Mammary epithelial cell (primary cell): ENCODE measurements at regions of chr9 and their contacts with region 1.

Region 1: DNA sequence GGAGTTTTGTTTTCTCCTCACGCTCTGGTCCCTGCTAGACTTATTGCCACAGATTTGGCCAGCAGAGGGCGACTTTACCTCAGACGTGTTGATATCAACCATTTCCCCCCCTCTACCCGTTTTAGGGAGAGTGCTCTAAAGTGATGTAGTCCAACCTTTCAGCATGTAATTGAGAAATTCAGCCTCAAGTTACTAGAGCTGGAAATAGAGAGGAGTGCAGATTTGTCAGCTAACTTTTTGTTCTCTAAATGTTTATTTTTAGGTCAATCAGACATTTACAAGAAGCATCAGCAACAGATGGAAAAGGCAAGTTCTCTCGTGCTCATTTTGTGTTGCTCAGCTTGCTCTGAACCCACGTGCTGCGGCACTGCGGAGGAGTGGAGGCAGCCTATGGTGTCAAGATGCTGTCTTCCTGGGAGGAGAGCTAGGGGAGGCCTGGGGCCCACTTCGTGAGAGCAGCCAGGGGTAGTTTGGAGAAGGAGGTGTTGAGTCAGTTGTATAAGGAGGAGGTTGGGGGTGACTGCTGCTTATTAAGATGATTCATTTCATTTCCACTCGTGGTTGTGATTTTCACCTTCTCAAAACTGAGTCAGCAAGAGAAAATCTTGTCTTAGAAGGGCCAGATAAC is 53.6 kb downstream of the GPR107 start:
- DNase-seq: peak; percentile 52
- H3K4me3 ChIP-seq: no peak overlapping the region
- H3K27ac ChIP-seq: no peak overlapping the region
- H3K4me1 ChIP-seq: no peaks in the 10 kb centered on the region
- H3K27me3 ChIP-seq: no peaks in the 10 kb centered on the region
- CTCF ChIP-seq: peak; percentile 79 to 80

Region 2: GRCh38 chr9:129929467-129930125 is 177.8 kb before region 1 on chr9:
- CTCF ChIA-PET with region 1: no interaction called
- dilution Hi-C with region 1: no loop called
- in situ Hi-C with region 1: no loop called
- intact Hi-C with region 1: no loop called
- DNase-seq: peak; percentile 21
- H3K4me3 ChIP-seq: no peak overlapping the region
- H3K27ac ChIP-seq: no peak overlapping the region
- H3K4me1 ChIP-seq: no peaks in the 10 kb centered on the region
- H3K27me3 ChIP-seq: no peaks in the 10 kb centered on the region
- CTCF ChIP-seq: no peak

Region 3: DNA sequence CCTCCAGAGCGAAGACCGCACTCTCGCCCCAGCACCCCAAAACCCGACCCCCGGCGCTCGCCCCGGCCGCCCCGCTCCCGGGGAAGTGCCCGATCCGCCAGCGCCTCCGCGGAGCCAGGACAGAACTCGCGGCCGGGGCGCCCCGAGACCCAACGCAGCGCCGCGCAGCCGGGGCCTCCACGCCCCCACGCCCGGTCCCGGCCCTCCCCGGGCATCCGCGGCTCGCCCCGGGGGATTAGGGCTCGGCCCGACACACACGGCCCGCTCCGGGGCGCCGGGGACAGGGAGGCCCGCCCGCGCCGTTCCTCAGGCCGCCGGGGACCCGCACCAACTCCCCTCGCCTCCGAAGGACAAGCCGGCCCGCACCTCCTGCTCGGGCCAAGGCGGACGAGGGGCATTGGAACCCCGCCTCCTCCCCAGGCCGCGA is 64.9 kb before region 1 on chr9:
- CTCF ChIA-PET with region 1: no interaction called
- dilution Hi-C with region 1: no loop called
- in situ Hi-C with region 1: no loop called
- intact Hi-C with region 1: no loop called
- DNase-seq: no peak
- H3K4me3 ChIP-seq: peak overlapping the region; percentile 79 to 88 (median 86)
- H3K27ac ChIP-seq: peak overlapping the region; percentile 34
- H3K4me1 ChIP-seq: peaks cover 4% of the 10 kb centered on the region
- H3K27me3 ChIP-seq: no peaks in the 10 kb centered on the region
- CTCF ChIP-seq: no peak

Region 4: DNA sequence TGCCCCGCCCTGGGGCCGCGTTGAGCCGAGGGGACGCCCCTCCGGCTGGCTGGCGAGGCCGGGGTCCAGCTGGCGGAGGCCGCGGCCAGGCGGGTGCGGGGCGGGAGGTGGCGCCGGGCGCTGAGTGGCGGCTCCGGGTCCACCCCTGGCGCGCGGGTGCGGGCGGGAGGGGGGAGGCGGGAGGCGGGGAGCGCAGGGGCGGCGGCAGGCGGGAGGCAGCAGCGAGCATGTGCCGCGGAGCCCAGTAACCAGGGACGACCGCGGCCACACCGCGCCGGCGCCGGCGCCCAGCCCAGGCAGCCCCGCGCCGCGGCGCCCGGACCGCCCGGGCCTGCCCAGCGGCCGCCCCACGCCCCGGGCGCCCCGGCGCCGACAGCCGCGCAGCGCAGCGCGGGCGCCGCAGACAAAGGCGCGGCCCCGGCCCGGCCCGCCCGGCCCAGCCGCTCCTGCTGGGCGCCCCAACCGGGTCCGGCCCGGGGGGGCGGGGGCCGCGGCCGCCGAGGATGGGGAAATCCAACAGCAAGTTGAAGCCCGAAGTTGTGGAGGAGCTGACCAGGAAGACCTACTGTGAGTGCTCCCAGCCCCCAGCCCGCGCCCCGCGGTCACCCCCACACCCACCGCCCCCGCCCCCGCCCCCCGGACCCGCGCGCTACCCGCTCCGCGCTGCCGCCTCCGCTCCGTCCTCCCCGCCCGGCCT is 65.0 kb after region 1 on chr9 and contains the start of gene NCS1:
- CTCF ChIA-PET with region 1: no interaction called
- dilution Hi-C with region 1: no loop called
- in situ Hi-C with region 1: no loop called
- intact Hi-C with region 1: loop called (anchors 1 kb)
- DNase-seq: peak; percentile 51
- H3K4me3 ChIP-seq: peak within 1 kb of the TSS; percentile 77 to 83 (median 80)
- H3K27ac ChIP-seq: peak within 1 kb of the TSS; percentile 5
- H3K4me1 ChIP-seq: peaks cover 10% of the 10 kb centered on the region
- H3K27me3 ChIP-seq: no peaks in the 10 kb centered on the region
- CTCF ChIP-seq: no peak
- total RNA-seq, gene NCS1: 76.5 to 85.4 TPM

Region 5: DNA sequence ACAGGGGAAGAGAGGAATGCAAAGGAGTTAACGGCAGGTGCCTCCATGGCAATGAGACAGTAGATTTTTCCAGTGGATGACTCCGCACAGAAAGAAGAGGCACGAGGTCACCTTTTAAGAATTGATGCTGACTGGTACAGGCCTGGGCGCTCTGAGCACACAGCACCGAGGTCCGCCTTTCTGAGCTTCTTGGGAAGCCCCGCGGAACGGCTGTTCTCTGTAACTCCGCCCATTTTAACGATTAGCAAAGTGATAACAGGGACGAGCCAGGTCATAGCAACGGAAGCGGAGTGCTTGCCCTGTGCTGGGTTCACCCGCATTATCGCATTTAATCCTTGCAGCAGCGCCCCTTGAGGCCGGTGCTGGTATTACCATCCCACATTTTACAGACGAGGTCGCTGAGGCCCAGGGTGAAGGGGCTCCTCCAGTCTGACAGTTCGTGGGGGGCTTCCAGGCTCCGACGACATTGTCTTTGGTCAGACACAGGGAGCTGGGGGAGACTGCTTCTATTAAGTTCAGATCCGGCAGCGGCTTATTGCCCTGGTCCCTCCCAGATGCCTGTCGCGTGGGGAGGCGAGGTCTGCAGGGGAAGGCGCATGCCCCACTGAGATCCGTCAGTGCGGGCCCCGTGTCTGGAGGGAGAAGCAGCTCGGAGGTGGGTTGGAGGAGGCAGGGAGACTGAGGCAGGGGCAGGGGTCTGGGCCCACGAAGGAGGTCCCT is 135.8 kb after region 1 on chr9:
- CTCF ChIA-PET with region 1: no interaction called
- dilution Hi-C with region 1: no loop called
- in situ Hi-C with region 1: loop called in 1 of 2 experiments (anchors 5 kb)
- intact Hi-C with region 1: loop called (anchors 1 kb)
- DNase-seq: no peak
- H3K4me3 ChIP-seq: no peak overlapping the region
- H3K27ac ChIP-seq: no peak overlapping the region
- H3K4me1 ChIP-seq: no peaks in the 10 kb centered on the region
- H3K27me3 ChIP-seq: no peaks in the 10 kb centered on the region
- CTCF ChIP-seq: peak; percentile 87 to 90

Region 6: GRCh38 chr9:130343445-130343918 is 236.1 kb after region 1 on chr9:
- CTCF ChIA-PET with region 1: no interaction called
- dilution Hi-C with region 1: no loop called
- in situ Hi-C with region 1: loop called in 1 of 2 experiments (anchors 10 kb)
- intact Hi-C with region 1: loop called (anchors 1 kb)
- DNase-seq: no peak
- H3K4me3 ChIP-seq: no peak overlapping the region
- H3K27ac ChIP-seq: no peak overlapping the region
- H3K4me1 ChIP-seq: no peaks in the 10 kb centered on the region
- H3K27me3 ChIP-seq: no peaks in the 10 kb centered on the region
- CTCF ChIP-seq: peak; percentile 44 to 67

Region 7: DNA sequence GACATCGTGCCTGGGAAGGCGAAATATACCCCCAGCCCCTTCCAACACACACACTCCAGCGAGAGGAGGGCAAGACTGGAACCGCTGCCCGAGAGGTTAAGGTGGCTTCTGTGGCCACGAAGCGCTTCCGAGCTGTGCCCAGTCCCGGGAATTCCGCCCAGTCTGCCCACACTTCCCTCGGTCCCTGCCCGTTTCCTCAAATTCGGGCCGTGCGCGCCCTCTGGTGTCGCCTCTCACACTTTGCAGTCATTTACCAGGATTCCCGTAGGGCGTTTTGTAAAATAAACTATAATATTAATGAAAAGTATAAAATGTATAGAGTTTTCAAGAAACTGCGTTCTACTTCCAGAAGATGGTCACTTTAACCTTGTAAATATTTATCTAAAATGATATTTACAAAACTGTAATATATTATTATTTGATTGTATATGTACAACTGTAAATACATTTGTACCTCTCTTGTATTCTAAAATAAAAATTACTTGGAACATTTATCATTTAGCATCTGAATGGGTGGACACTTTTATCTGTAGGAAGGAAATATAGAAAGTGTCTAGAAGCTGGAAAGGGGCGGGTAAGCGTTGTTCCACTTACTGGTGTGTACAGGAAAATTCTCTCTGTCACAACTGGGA is 575.3 kb after region 1 on chr9:
- CTCF ChIA-PET with region 1: no interaction called
- dilution Hi-C with region 1: no loop called
- in situ Hi-C with region 1: no loop called
- intact Hi-C with region 1: loop called (anchors 2 kb)
- DNase-seq: peak; percentile 58
- H3K4me3 ChIP-seq: peak overlapping the region; percentile 38 to 69 (median 44)
- H3K27ac ChIP-seq: no peak overlapping the region
- H3K4me1 ChIP-seq: peaks cover 17% of the 10 kb centered on the region
- H3K27me3 ChIP-seq: no peaks in the 10 kb centered on the region
- CTCF ChIP-seq: peak; percentile 71 to 83